Naive thymus-derived CD4-positive, alpha-beta T cell (primary cell): ENCODE measurements at regions of chr15 and their contacts with region 1.

Region 1: GRCh38 chr15:75625542-75626347 is at the start of gene SNUPN:
- DNase-seq: peak; percentile 75 to 92 (median 88)
- ATAC-seq: peak; percentile 97
- H3K4me3 ChIP-seq: peak within 1 kb of the TSS; percentile 100
- H3K4me3 Mint-ChIP-seq: peak within 1 kb of the TSS; percentile 85 to 99 (median 92)
- H3K27ac ChIP-seq: peak within 1 kb of the TSS; percentile 97
- H3K27ac Mint-ChIP-seq: peak within 1 kb of the TSS; percentile 92 to 99 (median 96)
- H3K4me1 ChIP-seq: peaks cover 11 to 16% of the 10 kb centered on the region in 2 donors
- H3K4me1 Mint-ChIP-seq: peaks cover 22 to 41% (median 35%) of the 10 kb centered on the region in 7 donors
- H3K27me3 ChIP-seq: no peaks in the 10 kb centered on the region
- H3K27me3 Mint-ChIP-seq: no peaks in the 10 kb centered on the region
- total RNA-seq, gene SNUPN: 16.5 to 33.2 (median 21.5) TPM

Region 2: GRCh38 chr15:74781431-74782258 is 844.1 kb before region 1 on chr15 and contains the start of gene CSK:
- CTCF ChIA-PET with region 1: no interaction called
- POLR2A ChIA-PET with region 1: no interaction called
- intact Hi-C with region 1: loop called in 1 of 2 experiments (anchors 5 kb)
- DNase-seq: peak; percentile 68 to 90 (median 85)
- ATAC-seq: peak; percentile 80
- H3K4me3 ChIP-seq: peak within 1 kb of the TSS; percentile 91
- H3K4me3 Mint-ChIP-seq: peak within 1 kb of the TSS; percentile 87 to 99 (median 96)
- H3K27ac ChIP-seq: peak within 1 kb of the TSS; percentile 92
- H3K27ac Mint-ChIP-seq: peak within 1 kb of the TSS; percentile 90 to 100 (median 98)
- H3K4me1 ChIP-seq: peaks cover 62% of the 10 kb centered on the region in 2 donors
- H3K4me1 Mint-ChIP-seq: peaks cover 64 to 73% (median 70%) of the 10 kb centered on the region in 7 donors
- H3K27me3 ChIP-seq: no peaks in the 10 kb centered on the region
- H3K27me3 Mint-ChIP-seq: no peaks in the 10 kb centered on the region
- total RNA-seq, gene CSK: 163 to 421 (median 228) TPM

Region 3: DNA sequence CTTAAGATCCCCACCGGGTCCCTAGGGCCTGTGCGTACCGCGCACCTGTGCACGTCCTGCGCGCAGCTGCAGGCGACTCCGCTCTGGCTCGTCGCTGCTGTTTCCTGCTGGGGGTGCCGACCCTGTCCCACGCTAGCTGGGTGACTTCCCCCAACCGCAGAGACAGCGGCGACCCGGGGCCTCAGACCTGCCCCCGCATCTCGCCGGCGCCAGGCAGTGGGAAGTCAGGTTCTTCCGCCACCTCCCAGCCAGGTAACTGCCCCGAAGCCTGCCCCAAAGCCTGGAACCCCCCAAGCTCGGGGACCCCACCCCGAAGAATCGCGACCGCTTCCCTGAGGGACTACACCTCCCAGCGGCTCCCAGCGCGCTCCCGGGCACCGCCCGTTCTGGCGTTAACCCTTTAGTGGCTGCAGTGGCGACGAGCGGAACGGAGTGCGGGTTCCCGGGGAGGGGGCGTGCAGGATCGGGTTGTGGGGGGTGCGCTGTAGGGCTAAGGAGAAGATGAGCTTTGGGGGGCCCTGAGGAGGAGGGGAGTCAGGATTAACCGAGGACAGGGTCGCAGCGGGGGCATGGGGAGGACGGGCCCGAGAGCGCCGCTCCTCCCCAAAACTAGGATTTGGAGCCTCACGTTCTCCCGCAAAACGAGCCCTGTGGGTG is 278.4 kb before region 1 on chr15:
- CTCF ChIA-PET with region 1: no interaction called
- POLR2A ChIA-PET with region 1: interaction called, 4 read pairs
- intact Hi-C with region 1: loop called in 1 of 2 experiments (anchors 1 kb)
- DNase-seq: peak; percentile 35 to 75 (median 69)
- ATAC-seq: peak; percentile 73
- H3K4me3 ChIP-seq: peak overlapping the region; percentile 59
- H3K4me3 Mint-ChIP-seq: peak overlapping the region; percentile 78 to 95 (median 90)
- H3K27ac ChIP-seq: peak overlapping the region; percentile 66
- H3K27ac Mint-ChIP-seq: peak overlapping the region; percentile 78 to 95 (median 89)
- H3K4me1 ChIP-seq: peaks cover 29 to 30% of the 10 kb centered on the region in 2 donors
- H3K4me1 Mint-ChIP-seq: peaks cover 21 to 45% (median 31%) of the 10 kb centered on the region in 7 donors
- H3K27me3 ChIP-seq: no peaks in the 10 kb centered on the region
- H3K27me3 Mint-ChIP-seq: peaks cover 0 to 26% (median 0%) of the 10 kb centered on the region in 5 donors

Region 4: DNA sequence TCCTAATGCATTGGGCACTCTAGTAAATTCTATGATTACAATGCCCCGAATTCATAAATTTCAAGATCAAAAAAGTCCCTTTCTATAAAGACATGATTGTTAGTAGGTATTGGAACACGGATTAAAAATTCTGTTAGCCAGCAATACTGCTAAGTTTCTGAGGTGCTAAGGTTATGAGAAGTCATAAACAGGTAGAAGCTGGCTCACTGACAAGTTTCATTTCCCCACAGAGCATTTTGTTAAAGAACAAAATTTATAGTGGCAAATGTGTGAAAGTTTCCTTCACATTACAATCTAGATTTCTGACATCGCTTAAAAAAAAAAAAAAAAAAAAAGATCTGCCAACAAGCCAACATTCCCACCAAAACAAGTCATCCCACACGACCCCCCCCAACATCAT is 245.0 kb before region 1 on chr15:
- CTCF ChIA-PET with region 1: no interaction called
- POLR2A ChIA-PET with region 1: no interaction called
- intact Hi-C with region 1: no loop called
- DNase-seq: no peak
- ATAC-seq: no peak
- H3K4me3 ChIP-seq: no peak overlapping the region
- H3K4me3 Mint-ChIP-seq: no peak overlapping the region
- H3K27ac ChIP-seq: no peak overlapping the region
- H3K27ac Mint-ChIP-seq: peak overlapping the region in 2 of 9 donors; percentile 2 to 22
- H3K4me1 ChIP-seq: no peaks in the 10 kb centered on the region
- H3K4me1 Mint-ChIP-seq: peaks cover 0 to 4% (median 0%) of the 10 kb centered on the region in 7 donors
- H3K27me3 ChIP-seq: no peaks in the 10 kb centered on the region
- H3K27me3 Mint-ChIP-seq: no peaks in the 10 kb centered on the region

Region 5: DNA sequence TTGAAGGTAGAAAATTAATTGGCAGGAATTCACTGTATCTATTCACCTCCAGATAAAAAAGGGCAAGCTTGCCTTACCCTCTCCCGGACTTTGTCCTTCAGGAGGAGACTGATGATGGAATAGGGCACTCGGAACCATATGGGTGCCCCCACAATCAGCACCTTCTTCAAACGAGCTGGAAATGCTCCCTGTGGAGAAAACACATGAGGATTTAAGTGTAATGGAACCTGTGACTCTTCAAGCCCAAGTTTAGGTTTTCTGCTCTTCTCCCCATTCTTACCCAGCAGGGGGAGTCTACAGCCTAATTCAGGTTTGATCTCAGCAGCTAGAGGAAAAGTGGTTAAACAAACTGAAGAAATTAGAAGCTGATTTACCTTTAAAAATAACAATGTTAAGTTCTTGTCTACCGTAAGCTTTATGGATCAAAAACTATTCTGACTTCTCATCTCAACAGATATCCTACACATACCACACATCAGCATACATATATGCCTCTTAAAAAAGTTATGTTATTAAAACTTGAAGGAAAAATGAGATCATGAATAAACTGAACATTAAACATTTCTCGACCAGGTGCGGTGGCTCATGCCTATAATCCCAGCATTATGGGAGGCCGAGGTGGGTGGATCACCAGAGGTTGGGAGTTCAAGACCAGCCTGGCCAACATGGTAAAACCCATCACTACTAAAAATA is 116.8 kb before region 1 on chr15:
- CTCF ChIA-PET with region 1: interaction called, 6 read pairs
- POLR2A ChIA-PET with region 1: interaction called, 7 read pairs
- intact Hi-C with region 1: loop called in 1 of 2 experiments (anchors 1 kb)
- DNase-seq: peak in 7 of 9 donors; percentile 38 to 65 (median 55)
- ATAC-seq: peak; percentile 37
- H3K4me3 ChIP-seq: no peak overlapping the region
- H3K4me3 Mint-ChIP-seq: no peak overlapping the region
- H3K27ac ChIP-seq: no peak overlapping the region
- H3K27ac Mint-ChIP-seq: peak overlapping the region in 5 of 9 donors; percentile 2 to 31 (median 21)
- H3K4me1 ChIP-seq: no peaks in the 10 kb centered on the region
- H3K4me1 Mint-ChIP-seq: peaks cover 0 to 5% (median 4%) of the 10 kb centered on the region in 7 donors
- H3K27me3 ChIP-seq: no peaks in the 10 kb centered on the region
- H3K27me3 Mint-ChIP-seq: no peaks in the 10 kb centered on the region

Region 6: DNA sequence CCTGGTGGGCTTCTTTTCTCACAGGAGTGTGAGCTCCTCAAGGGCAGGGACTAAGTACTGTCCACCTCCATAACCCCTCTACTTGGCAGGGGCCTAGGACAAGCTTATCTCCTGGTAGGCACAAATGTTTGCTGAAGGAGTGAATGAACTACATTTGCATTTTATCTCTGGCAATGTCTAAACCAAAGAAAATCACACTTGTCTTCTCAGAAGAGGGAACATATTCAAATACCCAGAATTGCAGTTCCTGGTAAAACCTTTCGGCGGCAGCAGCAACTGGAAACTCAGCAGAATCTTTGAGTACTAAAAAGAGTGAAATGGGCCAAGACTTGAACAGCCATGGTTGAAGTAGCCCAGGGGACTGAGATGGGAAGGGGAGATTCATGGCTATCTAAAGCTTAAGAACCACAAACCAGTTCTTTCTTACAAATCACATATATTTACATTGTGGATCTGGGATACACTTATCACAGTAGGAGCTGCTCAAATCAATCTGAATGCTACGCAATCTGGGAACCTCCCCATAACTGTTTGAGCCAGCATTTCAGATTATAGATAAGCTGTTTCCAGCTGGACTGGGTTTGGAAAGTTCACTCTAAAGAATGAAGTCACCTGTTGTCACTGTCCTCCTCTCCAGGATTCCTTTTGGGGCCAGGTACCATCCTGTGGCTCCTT is 27.9 kb before region 1 on chr15:
- CTCF ChIA-PET with region 1: no interaction called
- POLR2A ChIA-PET with region 1: interaction called, 5 read pairs
- intact Hi-C with region 1: loop called in 1 of 2 experiments (anchors 1 kb)
- DNase-seq: peak in 7 of 9 donors; percentile 7 to 39 (median 26)
- ATAC-seq: no peak
- H3K4me3 ChIP-seq: no peak overlapping the region
- H3K4me3 Mint-ChIP-seq: peak overlapping the region in 3 of 10 donors; percentile 6 to 86 (median 14)
- H3K27ac ChIP-seq: peak overlapping the region; percentile 24
- H3K27ac Mint-ChIP-seq: peak overlapping the region in 7 of 9 donors; percentile 2 to 92 (median 54)
- H3K4me1 ChIP-seq: peaks cover 11 to 13% of the 10 kb centered on the region in 2 donors
- H3K4me1 Mint-ChIP-seq: peaks cover 16 to 40% (median 25%) of the 10 kb centered on the region in 7 donors
- H3K27me3 ChIP-seq: no peaks in the 10 kb centered on the region
- H3K27me3 Mint-ChIP-seq: no peaks in the 10 kb centered on the region

Region 7: DNA sequence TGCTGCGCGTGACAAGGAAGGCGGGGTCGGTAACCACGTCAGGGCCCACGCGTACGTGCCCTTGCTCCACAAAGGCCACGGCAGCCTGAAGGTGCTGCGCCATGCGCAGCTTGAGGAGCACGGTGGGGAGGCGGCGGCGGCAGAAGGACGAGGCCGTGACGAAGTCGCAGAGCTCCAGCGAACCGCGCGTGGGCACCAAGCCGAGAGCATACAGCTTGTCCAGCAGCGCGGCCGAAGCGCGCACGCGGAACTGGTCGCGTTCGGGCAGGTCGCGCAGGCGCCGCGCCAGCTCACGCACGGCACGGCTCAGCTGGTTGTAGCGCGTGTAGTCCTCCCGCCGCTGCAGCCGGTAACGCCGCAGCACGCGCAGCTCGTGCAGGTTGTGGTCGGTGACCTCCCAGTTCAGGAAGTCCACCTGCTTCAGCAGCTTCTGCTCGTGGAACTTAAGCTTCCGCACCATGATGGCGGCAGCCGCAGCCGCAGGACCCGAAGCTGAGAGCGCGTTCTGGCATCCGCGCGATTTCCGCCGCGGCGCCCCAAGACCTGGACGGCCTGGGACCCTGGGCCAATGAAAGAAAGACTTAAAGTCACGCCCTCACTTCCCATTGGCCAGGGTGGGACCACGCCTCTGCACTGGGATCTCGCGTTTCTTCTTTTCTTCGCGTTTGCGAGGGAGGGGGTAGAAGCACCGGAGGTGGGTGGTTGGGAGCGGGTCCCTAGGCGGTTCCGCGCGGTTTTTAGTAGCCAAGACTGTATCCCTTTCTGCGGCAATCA is 14.2 kb after region 1 on chr15 and contains the start of gene IMP3:
- CTCF ChIA-PET with region 1: interaction called, 19 read pairs
- POLR2A ChIA-PET with region 1: interaction called, 175 read pairs
- intact Hi-C with region 1: loop called (anchors 1 kb)
- DNase-seq: peak; percentile 75 to 96 (median 93)
- ATAC-seq: peak; percentile 95
- H3K4me3 ChIP-seq: peak within 1 kb of the TSS; percentile 97
- H3K4me3 Mint-ChIP-seq: peak within 1 kb of the TSS; percentile 84 to 98 (median 95)
- H3K27ac ChIP-seq: peak within 1 kb of the TSS; percentile 85
- H3K27ac Mint-ChIP-seq: peak within 1 kb of the TSS; percentile 39 to 98 (median 96)
- H3K4me1 ChIP-seq: peaks cover 23 to 24% of the 10 kb centered on the region in 2 donors
- H3K4me1 Mint-ChIP-seq: peaks cover 33 to 49% (median 39%) of the 10 kb centered on the region in 7 donors
- H3K27me3 ChIP-seq: no peaks in the 10 kb centered on the region
- H3K27me3 Mint-ChIP-seq: no peaks in the 10 kb centered on the region
- total RNA-seq, gene IMP3: 32.3 to 100 (median 89.5) TPM